GM12878 (cell line): ENCODE measurements at regions of chr10 and their contacts with region 1.

Region 1: GRCh38 chr10:96244354-96244753 is 27.0 kb downstream of the BLNK start:
- DNase-seq: peak; percentile 89
- ATAC-seq: peak; percentile 98
- H3K4me3 ChIP-seq: 0 out of 2 replicates have a peak overlapping the region, but pooled peaks have one; percentile 18
- H3K27ac ChIP-seq: peak overlapping the region; percentile 67
- H3K4me1 ChIP-seq: peaks cover 24% of the 10 kb centered on the region
- H3K27me3 ChIP-seq: no peaks in the 10 kb centered on the region
- CTCF ChIP-seq: no peak
- EP300 ChIP-seq: peak; percentile 41 to 56; a peak in 3 of 4 replicates
- POLR2A ChIP-seq: peak; percentile 46
- RAD21 ChIP-seq: peak; percentile 3; the same call in 1 of the 2 replicates

Region 2: GRCh38 chr10:96257944-96258343 is 13.6 kb after region 1 on chr10:
- CTCF ChIA-PET with region 1: interaction called, 219 read pairs
- POLR2A ChIA-PET with region 1: interaction called, 22 read pairs
- RAD21 ChIA-PET with region 1: interaction called, 22 read pairs
- SMC1A ChIA-PET with region 1: interaction called, 40 read pairs
- in situ Hi-C with region 1: no loop called
- intact Hi-C with region 1: no loop called
- DNase-seq: no peak
- ATAC-seq: peak; percentile 19; the same call in 2 of the 3 replicates
- H3K4me3 ChIP-seq: peak overlapping the region; percentile 1; the same call in 1 of the 2 replicates
- H3K27ac ChIP-seq: peak overlapping the region; percentile 38
- H3K4me1 ChIP-seq: peaks cover 34% of the 10 kb centered on the region
- H3K27me3 ChIP-seq: no peaks in the 10 kb centered on the region
- CTCF ChIP-seq: no peak
- EP300 ChIP-seq: no peak
- POLR2A ChIP-seq: no peak
- RAD21 ChIP-seq: no peak

Region 3: DNA sequence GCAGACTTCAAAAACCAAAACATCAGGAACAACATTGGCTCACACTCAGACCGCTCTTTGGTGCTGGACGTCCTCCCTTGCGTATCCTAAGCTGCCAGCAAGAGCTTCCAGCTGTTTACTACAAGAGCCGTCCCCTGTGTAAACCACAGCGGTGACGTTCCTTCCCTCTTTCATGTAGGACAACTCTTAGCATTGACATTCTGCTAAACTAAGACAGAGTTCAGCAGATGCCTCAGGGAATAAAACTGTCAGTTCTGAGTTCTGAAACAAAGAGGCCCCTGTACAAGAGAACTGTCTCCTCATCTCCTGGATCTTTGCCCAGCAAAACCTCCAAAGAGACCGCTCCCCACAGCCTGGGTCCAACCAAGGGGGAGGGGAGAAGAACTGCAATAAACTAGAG is 172.3 kb after region 1 on chr10:
- CTCF ChIA-PET with region 1: no interaction called
- POLR2A ChIA-PET with region 1: no interaction called
- RAD21 ChIA-PET with region 1: no interaction called
- SMC1A ChIA-PET with region 1: no interaction called
- in situ Hi-C with region 1: no loop called
- intact Hi-C with region 1: no loop called
- DNase-seq: no peak
- ATAC-seq: no peak
- H3K4me3 ChIP-seq: no peak overlapping the region
- H3K27ac ChIP-seq: no peak overlapping the region
- H3K4me1 ChIP-seq: no peaks in the 10 kb centered on the region; the same call in 1 of the 2 replicates
- H3K27me3 ChIP-seq: no peaks in the 10 kb centered on the region; a peak in 1 of 4 replicates
- CTCF ChIP-seq: no peak
- EP300 ChIP-seq: no peak
- POLR2A ChIP-seq: no peak
- RAD21 ChIP-seq: no peak